ENCODE measurements at regions of chrX and their contacts with region 1.

Region 1: GRCh38 chrX:50168241-50168687 is 32.5 kb downstream of the AKAP4 start:
- DNase-seq: no peak
- H3K4me3 Mint-ChIP-seq: no peak overlapping the region
- H3K27ac Mint-ChIP-seq: peak overlapping the region; percentile 52
- H3K4me1 Mint-ChIP-seq: peaks cover 13% of the 10 kb centered on the region
- H3K27me3 Mint-ChIP-seq: no peaks in the 10 kb centered on the region

Region 2: DNA sequence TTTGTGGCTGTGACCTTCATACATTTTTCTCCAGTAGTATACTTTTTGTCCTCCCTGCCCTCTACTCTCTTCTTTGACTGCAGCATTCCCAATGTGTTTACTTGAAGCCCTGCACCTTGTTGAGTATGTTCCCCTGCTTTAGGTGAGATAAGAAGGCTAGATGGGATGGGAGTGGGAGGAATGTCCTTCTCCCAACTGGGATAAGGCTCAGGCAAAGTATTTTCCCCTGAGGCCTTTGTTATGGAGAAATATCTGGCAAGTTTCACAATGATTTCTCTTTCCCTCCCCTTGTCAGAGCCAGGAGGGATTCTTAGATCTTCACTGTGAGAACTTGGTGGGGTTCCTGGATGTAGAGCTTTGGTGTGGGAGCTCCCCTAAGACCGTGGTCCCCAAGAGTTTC is 114.1 kb before region 1 on chrX:
- intact Hi-C with region 1: no loop called
- DNase-seq: no peak
- H3K4me3 Mint-ChIP-seq: no peak overlapping the region
- H3K27ac Mint-ChIP-seq: no peak overlapping the region
- H3K4me1 Mint-ChIP-seq: no peaks in the 10 kb centered on the region
- H3K27me3 Mint-ChIP-seq: no peaks in the 10 kb centered on the region

Region 3: GRCh38 chrX:50117476-50117875 is 50.8 kb before region 1 on chrX:
- intact Hi-C with region 1: no loop called
- DNase-seq: no peak
- H3K4me3 Mint-ChIP-seq: no peak overlapping the region
- H3K27ac Mint-ChIP-seq: no peak overlapping the region
- H3K4me1 Mint-ChIP-seq: no peaks in the 10 kb centered on the region
- H3K27me3 Mint-ChIP-seq: peaks cover 4% of the 10 kb centered on the region

Region 4: DNA sequence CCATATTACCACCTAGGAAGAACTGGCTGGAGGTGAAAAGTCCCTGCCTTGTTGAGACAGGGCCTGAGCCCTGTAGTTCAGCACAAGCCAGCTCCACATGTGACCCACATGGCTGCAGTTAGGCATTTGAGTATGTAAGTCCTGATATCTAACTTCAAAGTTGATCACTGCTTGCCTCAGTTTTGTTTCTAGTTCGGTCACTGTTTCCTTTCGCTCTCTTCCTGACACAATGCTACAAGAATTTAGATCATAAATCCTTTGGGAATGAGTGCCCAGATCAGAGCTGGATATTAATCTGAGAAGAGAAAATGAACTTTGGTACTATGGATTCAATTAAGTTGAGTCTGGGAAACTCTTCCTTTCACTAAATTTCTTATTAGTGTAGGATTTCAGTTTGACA is 15.8 kb before region 1 on chrX:
- intact Hi-C with region 1: no loop called
- DNase-seq: no peak
- H3K4me3 Mint-ChIP-seq: no peak overlapping the region
- H3K27ac Mint-ChIP-seq: no peak overlapping the region
- H3K4me1 Mint-ChIP-seq: no peaks in the 10 kb centered on the region
- H3K27me3 Mint-ChIP-seq: peaks cover 8% of the 10 kb centered on the region

Region 5: DNA sequence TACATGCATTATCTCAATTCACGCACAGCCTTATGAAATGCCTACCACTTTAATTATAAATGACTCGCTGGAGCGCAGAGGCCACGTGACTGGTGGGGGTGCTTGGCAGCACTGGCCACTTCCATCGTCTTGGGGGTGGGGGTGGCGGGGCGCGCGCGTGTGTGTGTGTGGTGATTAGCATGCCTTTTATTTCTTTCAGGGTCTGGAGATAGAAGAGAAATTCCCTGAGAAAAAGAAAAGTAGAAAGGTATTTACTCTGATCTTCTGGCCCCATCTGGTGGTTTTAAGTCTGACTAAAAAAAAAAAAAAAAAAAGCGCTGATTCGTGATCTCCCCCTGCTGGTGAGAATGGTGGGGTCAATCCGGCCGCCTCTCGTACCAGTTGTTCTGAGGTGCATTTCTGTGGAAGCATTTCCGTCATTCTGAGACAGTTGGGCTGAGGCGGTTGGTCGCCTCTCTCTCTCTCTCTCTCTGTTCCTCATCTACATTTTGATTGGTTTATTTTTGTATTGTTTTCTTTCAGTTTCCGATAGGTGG is 36.2 kb after region 1 on chrX and contains the start of gene CCNB3:
- intact Hi-C with region 1: loop called (anchors 5 kb)
- DNase-seq: peak; percentile 66
- H3K4me3 Mint-ChIP-seq: peak within 1 kb of the TSS; percentile 78
- H3K27ac Mint-ChIP-seq: peak within 1 kb of the TSS; percentile 83
- H3K4me1 Mint-ChIP-seq: peaks cover 11% of the 10 kb centered on the region
- H3K27me3 Mint-ChIP-seq: no peaks in the 10 kb centered on the region
- total RNA-seq, gene CCNB3: 0.55 and 1.3 TPM in 2 replicates

Region 6: DNA sequence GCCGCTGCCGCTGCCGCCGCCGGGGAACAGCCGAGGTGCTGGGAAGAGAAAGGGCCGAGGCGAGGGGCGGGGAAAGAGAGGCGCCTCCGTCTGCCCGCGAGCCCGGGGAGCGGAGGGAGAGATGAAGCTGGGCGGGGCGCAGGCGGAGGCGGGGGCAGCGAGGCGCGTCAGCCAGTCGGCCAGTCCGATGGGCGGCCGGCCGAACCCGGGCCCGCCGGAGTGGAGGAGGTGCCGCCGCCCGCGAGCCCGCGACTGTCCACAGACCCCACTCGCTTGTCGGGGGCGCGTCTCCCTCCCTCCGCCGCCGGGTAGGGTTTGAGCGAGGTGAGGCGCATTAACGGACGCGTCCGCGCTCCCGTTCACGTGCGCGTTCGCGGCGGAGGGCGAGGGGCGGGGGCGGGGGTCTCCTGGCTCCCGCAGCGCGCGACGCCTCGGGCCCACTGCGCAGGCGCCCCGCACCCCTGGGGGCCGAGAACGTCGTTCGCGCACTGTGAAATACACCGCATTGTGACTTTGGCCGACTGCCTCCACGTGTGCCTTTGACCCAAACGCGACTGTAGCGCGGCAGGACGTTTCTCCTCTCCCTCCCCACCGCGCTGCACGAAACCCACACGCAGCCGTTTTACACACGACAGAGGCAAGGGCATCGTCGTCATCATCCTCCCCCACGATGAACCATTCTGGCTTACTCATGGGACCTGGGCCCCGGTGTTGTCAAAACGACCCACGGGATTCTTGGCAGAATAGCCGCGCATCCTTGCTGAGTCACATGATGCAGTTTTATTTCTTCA is 1328.4 kb after region 1 on chrX and contains the start of gene NUDT11:
- intact Hi-C with region 1: no loop called
- DNase-seq: peak; percentile 46
- H3K4me3 Mint-ChIP-seq: peak within 1 kb of the TSS; percentile 88
- H3K27ac Mint-ChIP-seq: peak within 1 kb of the TSS; percentile 92
- H3K4me1 Mint-ChIP-seq: peaks cover 12% of the 10 kb centered on the region
- H3K27me3 Mint-ChIP-seq: peaks cover 8% of the 10 kb centered on the region
- total RNA-seq, gene NUDT11: 5.8 and 6.1 TPM in 2 replicates

Measured in activated T-helper 2 cell treated with anti-CD3 and anti-CD28 coated beads, Interferon-gamma antibody, Interleukin-2, Interleukin-4, amounts not matched to agents 10 μg/mL and 5 μg/mL and 100 μg/mL, durations not matched to agents 14 hours and 24 hours and 36 hours (primary cell).